ENCODE measurements at regions of chr1 and their contacts with region 1.

Region 1: DNA sequence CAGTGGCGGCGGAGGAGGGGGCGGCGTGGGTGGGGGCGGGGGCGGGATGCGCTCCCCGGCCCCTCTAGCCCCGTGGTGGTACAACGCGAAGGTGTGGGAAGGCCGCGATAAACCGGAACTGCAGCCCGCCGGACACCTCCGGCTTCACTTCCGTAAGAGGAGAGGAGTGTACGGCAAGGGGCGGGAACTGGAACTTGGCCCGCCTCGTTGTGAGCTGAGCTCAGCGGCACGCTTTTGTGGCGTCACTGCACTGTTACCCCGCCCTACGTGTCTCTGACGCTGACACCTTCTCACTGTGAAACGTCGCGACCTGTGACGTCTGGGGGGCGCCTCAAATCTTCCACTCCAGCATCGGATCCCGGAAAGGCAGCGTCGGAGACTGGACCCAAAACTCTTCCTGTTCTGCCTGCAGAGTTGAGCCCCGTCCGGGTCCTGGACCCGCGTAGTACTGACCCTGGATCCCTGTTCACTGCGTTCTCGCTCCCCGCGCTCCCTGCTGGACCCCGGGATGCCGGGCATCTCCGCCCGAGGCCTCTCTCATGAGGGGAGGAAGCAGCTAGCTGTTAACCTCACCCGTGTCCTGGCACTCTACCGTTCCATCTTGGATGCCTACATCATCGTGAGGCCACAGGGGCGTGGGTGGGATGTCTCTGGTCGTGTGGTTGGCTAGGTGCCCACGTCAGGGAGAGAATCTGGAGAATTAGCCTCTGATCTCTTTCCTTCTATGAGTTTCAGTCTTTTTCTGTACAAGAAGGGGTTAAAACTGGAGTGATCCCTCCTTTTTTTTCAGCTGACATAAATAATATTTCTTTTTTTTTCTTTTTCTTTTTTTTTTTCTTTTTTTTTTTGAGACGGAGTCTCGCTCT is at the start of gene ISG20L2:
- DNase-seq: peak; percentile 87
- H3K4me3 ChIP-seq: peak within 1 kb of the TSS; percentile 89
- H3K27me3 ChIP-seq: no peaks in the 10 kb centered on the region
- CTCF ChIP-seq: no peak
- polyA plus RNA-seq, gene ISG20L2: 30.6 and 36.6 TPM in 2 replicates

Region 2: GRCh38 chr1:156388174-156389137 is 340.4 kb before region 1 on chr1:
- CTCF ChIA-PET with region 1: no interaction called
- POLR2A ChIA-PET with region 1: no interaction called
- DNase-seq: no peak
- H3K4me3 ChIP-seq: no peak overlapping the region
- H3K27me3 ChIP-seq: peaks cover 34% of the 10 kb centered on the region
- CTCF ChIP-seq: no peak

Region 3: DNA sequence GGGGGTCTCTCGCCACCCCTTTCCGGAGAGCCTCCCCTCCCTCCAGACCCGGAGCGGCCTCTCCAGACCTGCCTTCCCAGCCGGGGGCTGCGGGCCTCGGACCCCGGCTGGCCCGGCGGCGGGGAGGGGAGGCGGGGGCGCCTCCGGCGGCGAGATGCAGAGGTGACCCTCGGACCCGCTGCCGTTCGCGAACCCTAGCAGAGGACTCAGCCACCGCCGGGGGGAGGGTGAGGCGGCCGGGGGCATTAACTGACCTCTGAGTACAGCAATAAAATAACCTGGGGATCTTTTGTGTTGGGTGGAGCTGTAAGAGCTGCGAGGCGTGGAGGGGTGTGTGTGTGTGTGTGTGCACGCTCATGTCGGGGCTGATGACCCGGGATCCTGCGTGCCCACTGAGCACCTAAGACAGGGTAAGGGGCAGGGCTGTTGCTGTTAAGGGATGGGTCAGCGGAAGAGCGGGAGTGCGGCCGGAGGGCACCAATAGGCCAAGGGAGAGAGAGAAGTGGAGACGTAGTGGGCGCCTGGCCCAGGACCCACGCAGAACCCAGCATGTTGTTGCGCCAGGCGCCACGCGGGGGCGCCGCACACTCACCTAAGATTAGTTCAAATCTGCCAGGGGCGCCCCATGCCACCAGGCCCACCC is 103.3 kb before region 1 on chr1:
- CTCF ChIA-PET with region 1: interaction called, 16 read pairs
- POLR2A ChIA-PET with region 1: no interaction called
- DNase-seq: no peak
- H3K4me3 ChIP-seq: no peak overlapping the region
- H3K27me3 ChIP-seq: peaks cover 29% of the 10 kb centered on the region
- CTCF ChIP-seq: peak; percentile 90

Region 4: DNA sequence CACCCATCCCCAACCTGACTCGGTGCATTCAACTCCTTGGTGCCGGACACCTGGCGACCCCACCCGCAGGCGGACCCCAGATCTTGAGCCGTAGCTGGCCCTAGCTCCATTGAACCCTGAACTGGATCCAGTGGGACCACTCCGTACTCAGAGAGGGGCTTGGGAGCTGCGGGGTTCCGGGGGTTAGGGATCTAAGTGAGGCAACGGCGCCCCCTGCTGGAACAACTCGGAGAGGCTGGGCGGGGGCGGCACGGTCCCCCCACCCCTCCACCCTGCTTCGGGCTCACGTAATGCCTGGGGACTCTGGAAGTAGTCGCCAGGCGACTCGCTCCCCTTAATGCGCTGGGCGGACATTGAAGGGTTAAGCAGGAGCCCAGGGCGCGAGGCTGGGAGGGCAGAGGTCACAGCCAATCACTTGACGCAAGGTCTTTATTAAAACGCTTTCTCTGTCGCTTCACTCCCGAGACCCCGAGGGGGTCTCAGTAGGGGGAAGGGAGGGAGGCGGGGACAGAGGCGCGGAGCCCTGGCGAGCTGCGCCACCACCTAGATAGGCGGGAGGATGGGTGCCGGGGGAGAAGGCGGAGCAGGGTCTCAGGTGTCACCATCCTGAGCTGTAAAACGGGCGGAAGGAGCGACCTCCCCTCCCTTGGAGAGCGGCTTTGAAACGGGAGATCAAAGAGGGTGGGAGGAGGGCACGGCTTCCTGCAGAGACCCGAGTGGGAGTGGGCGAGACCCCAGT is 22.7 kb before region 1 on chr1:
- CTCF ChIA-PET with region 1: interaction called, 1,556 read pairs
- POLR2A ChIA-PET with region 1: no interaction called
- DNase-seq: no peak
- H3K4me3 ChIP-seq: peak overlapping the region; percentile 58
- H3K27me3 ChIP-seq: no peaks in the 10 kb centered on the region
- CTCF ChIP-seq: peak; percentile 86

Region 5: GRCh38 chr1:156767101-156767878 is 38.5 kb after region 1 on chr1 and contains the start of gene PRCC:
- CTCF ChIA-PET with region 1: interaction called, 16 read pairs
- POLR2A ChIA-PET with region 1: no interaction called
- DNase-seq: peak; percentile 100
- H3K4me3 ChIP-seq: peak within 1 kb of the TSS; percentile 97
- H3K27me3 ChIP-seq: no peaks in the 10 kb centered on the region
- CTCF ChIP-seq: no peak
- polyA plus RNA-seq, gene PRCC: 60.3 and 93.6 TPM in 2 replicates

Region 6: DNA sequence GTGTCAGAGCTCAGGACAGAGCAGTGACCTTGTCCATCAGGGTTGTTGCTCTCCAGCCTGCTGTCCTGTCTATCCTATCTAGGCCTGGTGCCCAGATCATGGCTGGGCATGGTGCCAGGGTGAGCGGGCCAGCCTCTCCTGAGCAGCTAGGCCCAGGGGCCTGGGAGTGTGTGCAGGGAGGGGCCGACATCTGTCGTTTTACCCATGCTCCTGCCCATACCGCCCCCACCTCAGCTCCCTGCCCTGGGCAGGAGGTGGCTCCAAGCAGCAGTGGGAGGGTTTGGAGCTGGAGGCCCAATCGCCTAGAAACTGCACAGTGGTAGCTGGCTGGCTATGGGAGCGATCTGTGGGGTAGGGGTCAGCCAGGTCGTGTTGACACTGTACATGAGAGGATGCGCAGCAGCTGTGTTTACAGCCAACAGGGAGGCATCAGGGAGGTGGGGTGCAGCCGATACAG is 123.6 kb after region 1 on chr1:
- CTCF ChIA-PET with region 1: interaction called, 140 read pairs
- POLR2A ChIA-PET with region 1: no interaction called
- DNase-seq: no peak
- H3K4me3 ChIP-seq: no peak overlapping the region
- H3K27me3 ChIP-seq: peaks cover 45% of the 10 kb centered on the region
- CTCF ChIP-seq: no peak

Region 7: GRCh38 chr1:156892190-156893047 is 163.6 kb after region 1 on chr1:
- CTCF ChIA-PET with region 1: interaction called, 144 read pairs
- POLR2A ChIA-PET with region 1: interaction called, 3 read pairs
- DNase-seq: no peak
- H3K4me3 ChIP-seq: peak overlapping the region; percentile 16
- H3K27me3 ChIP-seq: peaks cover 2% of the 10 kb centered on the region; the same call in 1 of the 2 replicates
- CTCF ChIP-seq: peak; percentile 91

Measured in BJ (cell line).